Breast epithelium (tissue), 4 donors: ENCODE measurements at regions of chr12 and their contacts with region 1.

Region 1: DNA sequence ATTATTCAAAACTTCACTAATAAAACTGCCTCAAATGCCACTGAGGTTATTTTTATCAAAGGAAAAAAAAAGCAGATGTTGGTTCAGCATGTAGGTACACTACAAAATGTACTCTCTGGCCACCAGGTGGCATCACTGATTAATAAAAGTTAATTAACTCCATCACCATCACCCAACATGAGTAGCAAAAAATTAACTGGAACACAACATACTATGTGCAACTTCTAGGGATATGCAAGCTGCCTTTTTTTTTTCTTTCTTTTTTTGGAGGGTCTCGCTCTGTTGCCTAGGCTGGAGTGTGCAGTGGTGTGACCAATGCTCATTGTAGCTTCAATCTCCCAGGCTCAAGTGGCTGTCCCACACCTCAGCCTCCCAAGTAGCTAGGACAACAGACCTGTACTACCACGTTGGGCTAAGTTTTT is 43.8 kb upstream of the NR2C1 start:
- DNase-seq: peak in 1 of 2 donors; percentile 52
- H3K4me3 ChIP-seq: no peak overlapping the region
- H3K27ac ChIP-seq: no peak overlapping the region
- H3K4me1 ChIP-seq: no peaks in the 10 kb centered on the region
- H3K27me3 ChIP-seq: no peaks in the 10 kb centered on the region
- CTCF ChIP-seq: peak; percentile 81 to 92 (median 85)
- POLR2A ChIP-seq: no peak

Region 2: DNA sequence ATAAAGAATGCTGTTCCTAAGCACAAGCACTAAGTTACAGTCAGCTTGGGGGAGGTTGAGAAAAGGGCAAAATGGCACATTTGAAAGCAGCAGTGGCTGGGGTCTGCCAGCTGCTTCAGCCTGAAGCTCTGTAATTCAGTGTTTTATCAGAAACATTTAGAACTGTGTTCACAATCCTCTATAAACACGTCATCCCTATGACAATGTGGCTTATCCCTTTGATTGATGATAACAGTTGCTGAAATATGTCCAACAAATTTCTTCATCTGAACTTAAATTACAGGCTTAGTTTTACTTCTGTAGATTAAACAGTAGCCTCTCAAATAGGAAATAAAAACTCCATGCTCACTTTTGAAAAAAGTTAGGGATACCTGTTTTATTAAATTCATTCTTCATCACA is 209.3 kb after region 1 on chr12:
- intact Hi-C with region 1: loop called (anchors 10 kb)
- DNase-seq: no peak
- H3K4me3 ChIP-seq: no peak overlapping the region
- H3K27ac ChIP-seq: no peak overlapping the region
- H3K4me1 ChIP-seq: no peaks in the 10 kb centered on the region
- H3K27me3 ChIP-seq: no peaks in the 10 kb centered on the region
- CTCF ChIP-seq: no peak
- POLR2A ChIP-seq: no peak

Region 3: DNA sequence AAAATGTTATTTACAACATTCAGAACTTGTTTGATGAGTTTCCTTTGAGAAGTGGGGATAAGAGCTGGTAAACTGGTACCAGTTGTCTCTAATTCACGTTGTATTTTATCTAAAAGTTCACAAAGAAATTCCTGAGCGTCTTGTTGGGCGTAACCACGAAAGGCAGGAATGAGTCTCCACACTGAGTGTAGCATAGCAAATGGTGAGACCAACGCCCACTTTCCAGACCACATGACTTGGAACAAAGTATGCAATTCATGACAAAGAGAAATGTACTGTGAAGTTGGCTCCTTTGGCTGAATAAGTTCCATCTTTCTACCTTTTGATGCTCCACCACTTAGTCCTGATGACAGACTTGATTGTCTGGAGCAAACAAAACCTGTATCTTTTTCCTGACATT is 415.7 kb after region 1 on chr12:
- intact Hi-C with region 1: loop called (anchors 10 kb)
- DNase-seq: no peak
- H3K4me3 ChIP-seq: no peak overlapping the region
- H3K27ac ChIP-seq: no peak overlapping the region
- H3K4me1 ChIP-seq: no peaks in the 10 kb centered on the region
- H3K27me3 ChIP-seq: no peaks in the 10 kb centered on the region
- CTCF ChIP-seq: no peak
- POLR2A ChIP-seq: no peak

Region 4: GRCh38 chr12:95848575-95849388 is 731.6 kb after region 1 on chr12:
- intact Hi-C with region 1: loop called (anchors 10 kb)
- DNase-seq: no peak
- H3K4me3 ChIP-seq: no peak overlapping the region
- H3K27ac ChIP-seq: no peak overlapping the region
- H3K4me1 ChIP-seq: no peaks in the 10 kb centered on the region
- H3K27me3 ChIP-seq: no peaks in the 10 kb centered on the region
- CTCF ChIP-seq: peak in 1 of 3 donors; percentile 16
- POLR2A ChIP-seq: no peak